HCT116 (cell line): ENCODE measurements at regions of chr7 and their contacts with region 1.

Region 1: GRCh38 chr7:127107601-127108007 is 145.1 kb downstream of the GRM8 start:
- DNase-seq: peak; percentile 33
- ATAC-seq: peak; percentile 86
- H3K4me3 ChIP-seq: no peak overlapping the region
- H3K27ac ChIP-seq: no peak overlapping the region
- H3K4me1 ChIP-seq: no peaks in the 10 kb centered on the region
- H3K27me3 ChIP-seq: no peaks in the 10 kb centered on the region
- CTCF ChIP-seq: peak; percentile 41 to 76 (median 72); a peak in 5 of 6 replicates
- POLR2A ChIP-seq: no peak
- RAD21 ChIP-seq: peak; percentile 31; the same call in 1 of the 2 replicates

Region 2: DNA sequence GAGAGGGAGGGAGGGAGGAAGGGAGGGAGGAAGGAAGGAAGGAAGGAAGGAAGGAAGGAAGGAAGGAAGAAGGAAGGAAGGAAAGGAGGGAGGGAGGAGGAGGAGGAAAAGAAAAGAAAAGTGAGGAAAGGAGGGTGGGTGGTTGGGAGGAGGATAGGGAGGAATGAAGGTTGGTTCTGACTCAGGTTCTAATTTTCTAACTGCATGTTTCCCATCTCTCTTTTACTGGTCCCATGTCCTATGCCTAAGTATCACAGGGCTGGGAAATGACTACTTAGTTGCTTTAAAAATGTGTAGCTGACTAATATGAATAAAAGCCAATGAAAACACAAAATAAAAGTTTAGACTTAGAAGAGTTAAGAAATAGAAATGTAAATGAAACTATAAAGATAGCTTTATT is 1287.1 kb before region 1 on chr7:
- CTCF ChIA-PET with region 1: no interaction called
- POLR2A ChIA-PET with region 1: no interaction called
- RAD21 ChIA-PET with region 1: no interaction called
- intact Hi-C with region 1: no loop called
- DNase-seq: no peak
- ATAC-seq: no peak
- H3K4me3 ChIP-seq: no peak overlapping the region
- H3K27ac ChIP-seq: no peak overlapping the region
- H3K4me1 ChIP-seq: no peaks in the 10 kb centered on the region
- H3K27me3 ChIP-seq: no peaks in the 10 kb centered on the region
- CTCF ChIP-seq: no peak
- POLR2A ChIP-seq: no peak
- RAD21 ChIP-seq: no peak

Region 3: GRCh38 chr7:127253281-127254162 is 145.9 kb after region 1 on chr7:
- CTCF ChIA-PET with region 1: no interaction called
- POLR2A ChIA-PET with region 1: no interaction called
- RAD21 ChIA-PET with region 1: no interaction called
- intact Hi-C with region 1: loop called (anchors 5 kb)
- DNase-seq: peak; percentile 15
- ATAC-seq: peak; percentile 90
- H3K4me3 ChIP-seq: peak overlapping the region; percentile 55 to 66
- H3K27ac ChIP-seq: no peak overlapping the region
- H3K4me1 ChIP-seq: peaks cover 0 to 9% of the 10 kb centered on the region in 2 experiments; a peak in 1 of 4 replicates
- H3K27me3 ChIP-seq: peaks cover 52% of the 10 kb centered on the region
- CTCF ChIP-seq: peak; percentile 57 to 90 (median 85); a peak in 5 of 6 replicates
- POLR2A ChIP-seq: no peak
- RAD21 ChIP-seq: peak; percentile 73

Region 4: DNA sequence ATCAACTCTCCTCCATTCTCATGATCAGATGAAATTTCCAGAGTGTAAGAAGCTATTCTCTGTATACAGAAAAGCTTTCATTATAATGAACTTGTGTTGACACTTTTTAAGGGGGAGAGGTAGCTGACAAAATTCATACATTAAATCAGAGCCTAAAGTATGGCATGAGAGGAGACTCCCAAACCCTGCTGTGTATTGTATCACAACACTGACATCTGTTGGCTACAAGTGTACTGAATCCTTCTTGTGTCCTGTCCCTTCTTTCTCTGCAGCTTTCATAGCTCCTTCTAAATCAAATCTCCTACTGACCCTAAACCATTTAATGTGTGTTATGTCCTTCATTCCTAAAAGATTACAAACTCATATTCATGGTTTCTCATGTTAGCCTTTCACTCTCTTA is 406.9 kb after region 1 on chr7:
- CTCF ChIA-PET with region 1: interaction called, 6 read pairs
- POLR2A ChIA-PET with region 1: no interaction called
- RAD21 ChIA-PET with region 1: no interaction called
- intact Hi-C with region 1: loop called (anchors 1 kb)
- DNase-seq: peak; percentile 29
- ATAC-seq: peak; percentile 89
- H3K4me3 ChIP-seq: no peak overlapping the region
- H3K27ac ChIP-seq: no peak overlapping the region
- H3K4me1 ChIP-seq: no peaks in the 10 kb centered on the region
- H3K27me3 ChIP-seq: peaks cover 60% of the 10 kb centered on the region
- CTCF ChIP-seq: peak; percentile 43 to 56 (median 45); a peak in 4 of 6 replicates
- POLR2A ChIP-seq: no peak
- RAD21 ChIP-seq: peak; percentile 71